GM12878 (cell line): ENCODE measurements at regions of chr7 and their contacts with region 1.

Region 1: GRCh38 chr7:43139137-43139536 is 26.7 kb downstream of the HECW1 start:
- DNase-seq: no peak
- ATAC-seq: no peak
- H3K4me3 ChIP-seq: no peak overlapping the region
- H3K27ac ChIP-seq: no peak overlapping the region
- H3K4me1 ChIP-seq: no peaks in the 10 kb centered on the region
- H3K27me3 ChIP-seq: peaks cover 0 to 2% of the 10 kb centered on the region in 2 experiments; a peak in 2 of 4 replicates
- CTCF ChIP-seq: no peak
- EP300 ChIP-seq: no peak
- POLR2A ChIP-seq: no peak
- RAD21 ChIP-seq: no peak

Region 2: DNA sequence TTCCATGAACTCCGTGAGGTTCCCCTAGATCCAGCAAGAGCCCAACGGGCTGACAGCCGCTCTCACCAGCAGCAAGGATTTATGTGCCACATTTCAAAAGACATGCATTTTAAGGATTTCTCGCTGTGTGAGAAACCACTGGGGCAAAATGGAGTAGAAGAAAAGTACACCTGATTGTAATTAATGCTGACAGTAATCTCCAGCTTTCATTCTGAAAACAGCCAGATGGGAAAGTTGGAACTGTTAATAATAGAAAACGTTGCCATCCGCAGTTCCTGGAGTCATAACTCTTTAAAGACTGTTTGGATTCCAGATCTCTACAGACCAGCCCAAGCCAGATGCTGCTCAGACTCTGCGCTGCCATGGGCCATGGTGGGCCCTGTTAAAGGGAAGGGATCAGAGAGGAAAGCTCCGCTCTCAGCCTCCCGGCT is 685.2 kb before region 1 on chr7:
- CTCF ChIA-PET with region 1: no interaction called
- POLR2A ChIA-PET with region 1: no interaction called
- RAD21 ChIA-PET with region 1: no interaction called
- SMC1A ChIA-PET with region 1: no interaction called
- in situ Hi-C with region 1: no loop called
- intact Hi-C with region 1: no loop called
- DNase-seq: no peak
- ATAC-seq: no peak
- H3K4me3 ChIP-seq: no peak overlapping the region
- H3K27ac ChIP-seq: no peak overlapping the region
- H3K4me1 ChIP-seq: no peaks in the 10 kb centered on the region
- H3K27me3 ChIP-seq: no peaks in the 10 kb centered on the region
- CTCF ChIP-seq: no peak
- EP300 ChIP-seq: no peak
- POLR2A ChIP-seq: no peak
- RAD21 ChIP-seq: no peak

Region 3: GRCh38 chr7:43076189-43076605 is 62.9 kb before region 1 on chr7:
- CTCF ChIA-PET with region 1: no interaction called
- POLR2A ChIA-PET with region 1: no interaction called
- RAD21 ChIA-PET with region 1: no interaction called
- SMC1A ChIA-PET with region 1: no interaction called
- in situ Hi-C with region 1: no loop called
- intact Hi-C with region 1: no loop called
- DNase-seq: peak; percentile 88
- ATAC-seq: peak; percentile 84
- H3K4me3 ChIP-seq: no peak overlapping the region
- H3K27ac ChIP-seq: peak overlapping the region; percentile 73
- H3K4me1 ChIP-seq: peaks cover 13% of the 10 kb centered on the region
- H3K27me3 ChIP-seq: no peaks in the 10 kb centered on the region
- CTCF ChIP-seq: no peak
- EP300 ChIP-seq: peak; percentile 57 to 59; a peak in 3 of 4 replicates
- POLR2A ChIP-seq: no peak
- RAD21 ChIP-seq: no peak

Region 4: GRCh38 chr7:43192806-43193460 is 53.8 kb after region 1 on chr7:
- CTCF ChIA-PET with region 1: no interaction called
- POLR2A ChIA-PET with region 1: no interaction called
- RAD21 ChIA-PET with region 1: no interaction called
- SMC1A ChIA-PET with region 1: no interaction called
- in situ Hi-C with region 1: no loop called
- intact Hi-C with region 1: no loop called
- DNase-seq: no peak
- ATAC-seq: no peak
- H3K4me3 ChIP-seq: no peak overlapping the region
- H3K27ac ChIP-seq: no peak overlapping the region
- H3K4me1 ChIP-seq: no peaks in the 10 kb centered on the region
- H3K27me3 ChIP-seq: peaks cover 0 to 2% of the 10 kb centered on the region in 2 experiments; a peak in 1 of 4 replicates
- CTCF ChIP-seq: no peak
- EP300 ChIP-seq: no peak
- POLR2A ChIP-seq: no peak
- RAD21 ChIP-seq: no peak

Region 5: GRCh38 chr7:43220250-43220649 is 81.1 kb after region 1 on chr7:
- CTCF ChIA-PET with region 1: no interaction called
- POLR2A ChIA-PET with region 1: no interaction called
- RAD21 ChIA-PET with region 1: no interaction called
- SMC1A ChIA-PET with region 1: no interaction called
- in situ Hi-C with region 1: no loop called
- intact Hi-C with region 1: loop called (anchors 5 kb)
- DNase-seq: no peak
- ATAC-seq: no peak
- H3K4me3 ChIP-seq: no peak overlapping the region
- H3K27ac ChIP-seq: no peak overlapping the region
- H3K4me1 ChIP-seq: no peaks in the 10 kb centered on the region
- H3K27me3 ChIP-seq: no peaks in the 10 kb centered on the region; a peak in 1 of 4 replicates
- CTCF ChIP-seq: no peak
- EP300 ChIP-seq: no peak
- POLR2A ChIP-seq: no peak
- RAD21 ChIP-seq: no peak